Right lobe of liver (tissue), 6 donors: ENCODE measurements at regions of chr4 and their contacts with region 1.

Region 1: DNA sequence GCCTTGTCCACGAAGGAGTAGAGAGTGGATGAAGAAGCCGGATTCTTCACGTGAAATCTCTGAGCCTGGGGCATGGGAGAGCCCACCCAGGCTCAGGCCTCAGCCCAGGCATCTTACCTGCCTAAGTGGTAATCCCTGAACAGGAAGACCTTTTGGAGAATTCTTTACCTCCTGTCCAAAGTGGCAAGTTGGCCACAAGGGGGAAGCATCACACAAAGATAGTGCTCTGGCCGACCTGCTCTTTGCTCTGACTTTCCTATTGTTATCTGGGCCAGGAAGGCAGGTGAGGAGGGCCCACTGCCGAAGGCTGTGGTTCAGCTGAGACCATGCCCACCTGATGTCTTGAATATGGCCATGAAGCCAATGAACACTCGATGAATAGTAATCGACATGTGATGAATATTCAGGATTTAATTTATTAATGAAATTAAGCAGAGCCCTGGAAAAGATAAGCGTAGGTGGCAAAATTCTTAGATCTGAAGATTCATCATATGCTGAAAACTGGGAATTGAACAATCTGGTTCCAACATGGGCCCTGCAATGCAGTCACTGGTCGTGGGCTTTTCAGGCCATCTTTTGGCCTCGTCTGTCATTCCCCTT is 93.8 kb downstream of the PDGFRA start:
- DNase-seq: peak in 2 of 3 donors; percentile 62 to 70
- ATAC-seq: peak; percentile 90 to 94 (median 92)
- H3K4me3 ChIP-seq: no peak overlapping the region
- H3K27ac ChIP-seq: no peak overlapping the region
- H3K4me1 ChIP-seq: no peaks in the 10 kb centered on the region
- H3K27me3 ChIP-seq: no peaks in the 10 kb centered on the region
- CTCF ChIP-seq: peak; percentile 63 to 79 (median 69)
- POLR2A ChIP-seq: no peak

Region 2: GRCh38 chr4:54277691-54278090 is 45.2 kb before region 1 on chr4:
- intact Hi-C with region 1: no loop called
- DNase-seq: no peak
- ATAC-seq: peak in 3 of 4 donors; percentile 28 to 42 (median 36)
- H3K4me3 ChIP-seq: no peak overlapping the region
- H3K27ac ChIP-seq: no peak overlapping the region
- H3K4me1 ChIP-seq: no peaks in the 10 kb centered on the region
- H3K27me3 ChIP-seq: no peaks in the 10 kb centered on the region
- CTCF ChIP-seq: no peak
- POLR2A ChIP-seq: no peak

Region 3: GRCh38 chr4:54433686-54434085 is 110.8 kb after region 1 on chr4:
- intact Hi-C with region 1: loop called in 1 of 2 experiments (anchors 5 kb)
- DNase-seq: no peak
- ATAC-seq: peak in 1 of 4 donors; percentile 35
- H3K4me3 ChIP-seq: no peak overlapping the region
- H3K27ac ChIP-seq: no peak overlapping the region
- H3K4me1 ChIP-seq: no peaks in the 10 kb centered on the region
- H3K27me3 ChIP-seq: no peaks in the 10 kb centered on the region
- CTCF ChIP-seq: peak; percentile 28 to 43 (median 34)
- POLR2A ChIP-seq: no peak

Region 4: DNA sequence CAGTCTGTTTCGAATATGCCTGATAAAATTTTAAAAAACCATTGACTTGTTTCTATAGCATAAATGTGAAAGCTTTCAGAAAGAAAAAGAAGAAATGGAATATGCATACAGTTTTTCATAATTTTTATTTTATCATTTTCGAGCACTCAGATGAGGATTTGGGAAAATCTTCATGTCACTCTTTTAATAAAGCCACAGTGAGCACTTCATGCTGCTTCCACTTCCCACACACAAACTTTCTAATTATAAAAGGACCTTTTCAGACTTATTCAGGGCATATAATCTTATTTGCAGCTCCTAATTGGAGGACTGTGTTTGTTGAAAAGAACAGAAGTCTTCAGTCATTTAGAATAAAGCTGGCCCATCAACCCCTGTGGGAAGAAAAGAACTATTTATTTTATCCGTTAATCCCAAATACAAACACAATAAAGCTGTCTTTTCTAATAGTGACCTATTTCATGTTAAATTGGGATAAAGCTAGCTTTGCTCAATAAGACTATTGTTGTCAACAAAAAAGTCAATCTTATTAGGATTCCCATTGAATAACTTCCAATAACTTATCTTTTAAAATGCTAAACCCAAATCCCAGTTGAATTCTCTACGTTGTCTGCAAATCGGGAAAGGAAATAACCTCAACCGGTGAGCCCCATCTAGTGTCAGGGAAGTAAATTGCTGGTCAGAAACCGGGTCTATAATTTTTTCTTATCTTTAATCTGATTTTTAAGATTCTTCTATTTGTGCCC is 117.6 kb after region 1 on chr4:
- intact Hi-C with region 1: loop called in 1 of 2 experiments (anchors 10 kb)
- DNase-seq: no peak
- ATAC-seq: peak; percentile 52 to 72 (median 64)
- H3K4me3 ChIP-seq: no peak overlapping the region
- H3K27ac ChIP-seq: no peak overlapping the region
- H3K4me1 ChIP-seq: no peaks in the 10 kb centered on the region
- H3K27me3 ChIP-seq: no peaks in the 10 kb centered on the region
- CTCF ChIP-seq: peak; percentile 59 to 73 (median 65)
- POLR2A ChIP-seq: no peak